ENCODE measurements at regions of chr2 and their contacts with region 1.

Region 1: GRCh38 chr2:64144057-64145013 is at the start of gene PELI1:
- DNase-seq: peak; percentile 87 to 99 (median 92)
- ATAC-seq: peak; percentile 91
- H3K4me3 ChIP-seq: peak within 1 kb of the TSS; percentile 77
- H3K4me3 Mint-ChIP-seq: peak within 1 kb of the TSS; percentile 95
- H3K27ac ChIP-seq: peak within 1 kb of the TSS; percentile 64 to 90
- H3K27ac Mint-ChIP-seq: peak within 1 kb of the TSS; percentile 96
- H3K4me1 ChIP-seq: peaks cover 15% of the 10 kb centered on the region
- H3K4me1 Mint-ChIP-seq: peaks cover 36% of the 10 kb centered on the region
- H3K27me3 ChIP-seq: no peaks in the 10 kb centered on the region
- H3K27me3 Mint-ChIP-seq: no peaks in the 10 kb centered on the region
- CTCF ChIP-seq: peak; percentile 13
- total RNA-seq, gene PELI1: 257 to 274 TPM

Region 2: GRCh38 chr2:64063924-64064331 is 80.4 kb before region 1 on chr2:
- CTCF ChIA-PET with region 1: no interaction called
- POLR2A ChIA-PET with region 1: no interaction called
- intact Hi-C with region 1: loop called in 1 of 2 experiments (anchors 2 kb)
- DNase-seq: no peak
- ATAC-seq: no peak
- H3K4me3 ChIP-seq: no peak overlapping the region
- H3K4me3 Mint-ChIP-seq: no peak overlapping the region
- H3K27ac ChIP-seq: no peak overlapping the region
- H3K27ac Mint-ChIP-seq: peak overlapping the region; percentile 90
- H3K4me1 ChIP-seq: peaks cover 19% of the 10 kb centered on the region
- H3K4me1 Mint-ChIP-seq: peaks cover 28% of the 10 kb centered on the region
- H3K27me3 ChIP-seq: no peaks in the 10 kb centered on the region
- H3K27me3 Mint-ChIP-seq: no peaks in the 10 kb centered on the region
- CTCF ChIP-seq: no peak

Region 3: DNA sequence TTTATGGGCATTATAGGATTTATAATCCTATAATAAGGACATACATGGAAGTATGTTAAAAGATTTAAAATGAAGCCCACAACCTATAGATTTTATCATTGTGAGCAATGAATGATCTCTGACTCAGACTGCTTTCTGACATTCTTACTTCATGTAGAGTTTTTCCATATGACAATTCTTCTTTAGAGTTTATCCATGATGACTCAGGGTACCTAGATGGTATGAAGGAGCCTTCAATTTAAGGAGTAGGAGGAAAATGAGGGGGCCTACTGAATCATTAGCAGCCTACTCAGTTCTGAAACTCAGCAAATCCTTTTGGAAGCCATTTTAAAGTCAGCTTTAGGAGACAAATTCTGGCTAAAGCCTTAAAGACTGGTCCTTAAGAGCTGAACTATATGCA is 10.5 kb before region 1 on chr2:
- CTCF ChIA-PET with region 1: no interaction called
- POLR2A ChIA-PET with region 1: interaction called, 11 read pairs
- intact Hi-C with region 1: no loop called
- DNase-seq: no peak
- ATAC-seq: no peak
- H3K4me3 ChIP-seq: no peak overlapping the region
- H3K4me3 Mint-ChIP-seq: no peak overlapping the region
- H3K27ac ChIP-seq: no peak overlapping the region
- H3K27ac Mint-ChIP-seq: no peak overlapping the region
- H3K4me1 ChIP-seq: peaks cover 10% of the 10 kb centered on the region
- H3K4me1 Mint-ChIP-seq: peaks cover 80% of the 10 kb centered on the region
- H3K27me3 ChIP-seq: no peaks in the 10 kb centered on the region
- H3K27me3 Mint-ChIP-seq: no peaks in the 10 kb centered on the region
- CTCF ChIP-seq: no peak

Region 4: DNA sequence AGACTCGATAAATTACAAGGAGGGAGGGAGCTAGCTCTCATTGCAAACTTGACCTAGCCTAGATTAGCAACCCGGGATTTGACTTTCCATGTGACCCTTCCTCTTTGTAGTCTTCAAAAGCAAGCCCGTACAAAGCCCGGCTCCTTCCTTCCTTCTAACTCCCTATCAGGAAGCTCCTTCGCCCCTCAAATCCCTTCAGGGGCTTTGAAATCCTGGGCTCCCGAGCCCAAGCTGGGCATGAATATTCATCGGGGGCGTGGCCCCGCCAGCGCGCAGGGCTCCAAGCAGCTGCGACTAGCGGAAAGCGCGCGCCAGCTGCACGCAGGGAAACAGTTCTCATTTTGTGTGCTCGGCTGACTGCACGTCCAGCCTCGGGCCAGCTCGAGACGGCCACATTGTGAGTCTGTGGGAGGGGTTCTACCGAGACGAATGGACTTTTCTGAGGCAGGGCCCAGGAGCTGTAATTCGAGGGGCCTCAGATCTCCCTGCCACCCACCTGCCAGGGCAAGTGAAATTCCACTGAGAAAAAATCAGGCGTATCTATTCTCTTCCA is 83.9 kb after region 1 on chr2:
- CTCF ChIA-PET with region 1: no interaction called
- POLR2A ChIA-PET with region 1: interaction called, 16 read pairs
- intact Hi-C with region 1: loop called in 1 of 2 experiments (anchors 5 kb)
- DNase-seq: peak; percentile 34 to 79 (median 54)
- ATAC-seq: peak; percentile 94
- H3K4me3 ChIP-seq: peak overlapping the region; percentile 64
- H3K4me3 Mint-ChIP-seq: peak overlapping the region; percentile 91
- H3K27ac ChIP-seq: peak overlapping the region in 1 of 2 donors; percentile 30
- H3K27ac Mint-ChIP-seq: peak overlapping the region; percentile 80
- H3K4me1 ChIP-seq: peaks cover 22% of the 10 kb centered on the region
- H3K4me1 Mint-ChIP-seq: peaks cover 19% of the 10 kb centered on the region
- H3K27me3 ChIP-seq: no peaks in the 10 kb centered on the region
- H3K27me3 Mint-ChIP-seq: no peaks in the 10 kb centered on the region
- CTCF ChIP-seq: no peak

Region 5: DNA sequence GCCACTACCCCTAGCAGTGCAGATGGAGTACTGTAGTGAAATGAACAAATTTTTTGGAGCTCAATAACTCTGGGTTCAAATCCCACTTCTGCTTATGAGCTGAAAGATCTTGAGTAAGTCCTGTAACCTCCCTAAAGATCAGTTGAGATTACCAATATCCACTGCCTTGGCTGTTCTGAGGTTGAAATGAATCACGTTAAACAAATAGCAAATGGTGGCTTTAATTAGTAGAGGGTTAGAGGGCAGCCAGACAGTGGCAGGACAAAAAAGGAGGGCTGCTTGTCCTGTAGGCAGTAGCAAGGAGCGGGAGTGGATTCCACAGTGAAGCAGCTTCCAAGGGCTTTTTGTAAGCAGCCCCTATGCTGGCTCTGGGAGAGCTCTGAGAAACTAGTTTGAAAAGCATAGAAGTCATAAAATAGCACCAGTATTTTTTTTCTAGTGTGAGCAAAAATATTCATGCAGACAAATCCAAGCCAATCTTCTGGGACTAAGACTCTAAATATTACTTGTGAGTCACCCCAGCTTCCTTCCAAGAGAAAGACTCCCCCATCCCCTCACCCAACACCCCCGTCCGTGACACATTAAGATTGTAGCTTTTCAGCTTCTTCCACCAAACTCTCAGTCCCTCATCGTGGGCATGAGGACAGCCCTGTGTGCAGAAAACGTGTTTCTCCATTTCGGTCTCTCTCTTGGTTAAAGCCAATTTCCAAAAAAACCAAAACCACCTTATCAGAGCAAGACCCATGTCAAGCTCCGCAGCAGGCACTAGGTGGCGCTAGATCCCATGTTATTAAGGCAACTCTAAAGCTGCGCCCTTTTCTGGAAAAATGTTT is 186.2 kb after region 1 on chr2:
- CTCF ChIA-PET with region 1: interaction called, 10 read pairs
- POLR2A ChIA-PET with region 1: interaction called, 38 read pairs
- intact Hi-C with region 1: loop called in 1 of 2 experiments (anchors 2 kb)
- DNase-seq: peak; percentile 63 to 92 (median 74)
- ATAC-seq: peak; percentile 24
- H3K4me3 ChIP-seq: no peak overlapping the region
- H3K4me3 Mint-ChIP-seq: peak overlapping the region; percentile 81
- H3K27ac ChIP-seq: no peak overlapping the region
- H3K27ac Mint-ChIP-seq: peak overlapping the region; percentile 50
- H3K4me1 ChIP-seq: peaks cover 36% of the 10 kb centered on the region
- H3K4me1 Mint-ChIP-seq: peaks cover 38% of the 10 kb centered on the region
- H3K27me3 ChIP-seq: no peaks in the 10 kb centered on the region
- H3K27me3 Mint-ChIP-seq: no peaks in the 10 kb centered on the region
- CTCF ChIP-seq: peak; percentile 86

Region 6: GRCh38 chr2:64558445-64559081 is 414.2 kb after region 1 on chr2:
- CTCF ChIA-PET with region 1: no interaction called
- POLR2A ChIA-PET with region 1: no interaction called
- intact Hi-C with region 1: no loop called
- DNase-seq: no peak
- ATAC-seq: no peak
- H3K4me3 ChIP-seq: no peak overlapping the region
- H3K4me3 Mint-ChIP-seq: no peak overlapping the region
- H3K27ac ChIP-seq: no peak overlapping the region
- H3K27ac Mint-ChIP-seq: peak overlapping the region; percentile 24
- H3K4me1 ChIP-seq: no peaks in the 10 kb centered on the region
- H3K4me1 Mint-ChIP-seq: peaks cover 33% of the 10 kb centered on the region
- H3K27me3 ChIP-seq: no peaks in the 10 kb centered on the region
- H3K27me3 Mint-ChIP-seq: no peaks in the 10 kb centered on the region
- CTCF ChIP-seq: no peak

Region 7: GRCh38 chr2:65227425-65228262 is 1083.3 kb after region 1 on chr2 and contains the start of gene ACTR2:
- CTCF ChIA-PET with region 1: no interaction called
- POLR2A ChIA-PET with region 1: no interaction called
- intact Hi-C with region 1: loop called in 1 of 2 experiments (anchors 10 kb)
- DNase-seq: peak; percentile 87 to 98 (median 92)
- ATAC-seq: peak; percentile 93
- H3K4me3 ChIP-seq: peak within 1 kb of the TSS; percentile 76
- H3K4me3 Mint-ChIP-seq: peak within 1 kb of the TSS; percentile 100
- H3K27ac ChIP-seq: peak within 1 kb of the TSS; percentile 97 to 98
- H3K27ac Mint-ChIP-seq: peak within 1 kb of the TSS; percentile 98
- H3K4me1 ChIP-seq: peaks cover 35% of the 10 kb centered on the region
- H3K4me1 Mint-ChIP-seq: peaks cover 53% of the 10 kb centered on the region
- H3K27me3 ChIP-seq: no peaks in the 10 kb centered on the region
- H3K27me3 Mint-ChIP-seq: no peaks in the 10 kb centered on the region
- CTCF ChIP-seq: no peak
- total RNA-seq, gene ACTR2: 128 to 130 TPM

Measured in CD4-positive, alpha-beta T cell (primary cell).